ENCODE measurements at regions of chr20 and their contacts with region 1.

Region 1: GRCh38 chr20:34312544-34313217 is 9.5 kb upstream of the AHCY start:
- DNase-seq: peak; percentile 83 to 91
- ATAC-seq: peak; percentile 80

Region 2: DNA sequence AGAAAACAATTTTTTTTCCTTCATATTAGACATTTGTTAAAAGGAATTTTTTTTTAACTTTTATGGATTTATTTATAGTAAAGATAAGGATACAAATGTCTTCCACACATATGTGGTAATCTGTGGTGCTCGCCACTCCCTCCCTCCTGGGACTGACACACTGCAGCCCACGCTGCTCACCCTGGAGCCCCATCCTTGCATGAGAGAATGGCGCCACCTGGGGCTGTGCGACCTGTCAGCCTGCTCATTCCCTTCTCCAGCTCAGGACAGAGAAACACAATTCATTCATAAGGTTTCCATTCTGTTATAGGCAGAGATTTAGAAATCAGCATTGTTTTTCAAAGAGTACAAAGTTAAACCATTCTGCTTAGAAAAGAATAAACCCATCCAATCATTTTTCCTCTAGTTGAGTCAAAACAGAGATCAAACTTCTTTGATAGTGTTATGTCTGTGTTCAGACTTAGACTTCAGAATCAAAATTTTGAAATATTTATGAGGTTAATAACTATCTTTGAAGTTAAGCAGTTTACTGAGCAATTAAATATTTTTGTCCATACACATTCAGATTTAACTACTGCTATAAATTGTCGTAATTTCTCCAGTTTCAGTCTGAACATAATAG is 160.7 kb after region 1 on chr20:
- intact Hi-C with region 1: loop called in 1 of 2 experiments (anchors 10 kb)
- DNase-seq: peak in 1 of 2 donors; percentile 55
- ATAC-seq: peak; percentile 74

Region 3: DNA sequence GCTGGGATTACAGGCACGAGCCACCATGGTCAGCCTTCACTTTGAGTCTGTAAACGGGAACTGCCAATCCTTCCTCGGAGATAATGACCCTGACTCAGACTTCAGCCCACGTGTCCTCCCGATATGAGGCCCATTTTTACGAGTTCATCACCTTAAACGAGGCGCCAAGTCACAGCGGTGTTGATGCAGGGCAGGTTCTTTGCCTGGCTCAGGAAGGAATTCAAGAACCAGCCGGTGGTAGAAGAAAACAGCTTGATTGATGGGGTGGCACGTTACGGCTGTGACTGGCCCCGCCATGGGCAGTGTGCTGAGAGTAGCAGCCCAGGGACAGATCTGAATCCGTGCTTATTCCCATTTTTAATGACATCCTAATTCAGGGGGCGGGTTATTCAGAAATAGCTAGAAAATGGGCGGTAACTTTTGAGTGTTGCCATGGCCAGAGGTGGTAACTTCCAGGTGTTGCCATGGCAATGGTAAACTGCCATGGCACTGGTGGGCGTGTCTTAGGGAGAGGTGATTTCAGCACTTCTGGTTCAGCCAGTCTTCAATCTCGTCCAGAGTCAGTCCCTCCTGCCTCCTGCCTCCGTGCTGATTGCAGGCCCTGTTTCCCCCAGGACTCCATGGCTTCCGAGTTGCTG is 236.7 kb after region 1 on chr20:
- intact Hi-C with region 1: no loop called
- DNase-seq: peak in 1 of 2 donors; percentile 52
- ATAC-seq: peak; percentile 35